HEK293 (cell line): ENCODE measurements at regions of chr17 and their contacts with region 1.

Region 1: GRCh38 chr17:1055751-1056645 is 59.1 kb downstream of the TIMM22 start:
- H3K4me3 ChIP-seq: no peak overlapping the region
- H3K27ac ChIP-seq: 0 out of 2 replicates have a peak overlapping the region, but pooled peaks have one; percentile 41
- H3K4me1 ChIP-seq: no peaks in the 10 kb centered on the region
- CTCF ChIP-seq: peak; percentile 77

Region 2: DNA sequence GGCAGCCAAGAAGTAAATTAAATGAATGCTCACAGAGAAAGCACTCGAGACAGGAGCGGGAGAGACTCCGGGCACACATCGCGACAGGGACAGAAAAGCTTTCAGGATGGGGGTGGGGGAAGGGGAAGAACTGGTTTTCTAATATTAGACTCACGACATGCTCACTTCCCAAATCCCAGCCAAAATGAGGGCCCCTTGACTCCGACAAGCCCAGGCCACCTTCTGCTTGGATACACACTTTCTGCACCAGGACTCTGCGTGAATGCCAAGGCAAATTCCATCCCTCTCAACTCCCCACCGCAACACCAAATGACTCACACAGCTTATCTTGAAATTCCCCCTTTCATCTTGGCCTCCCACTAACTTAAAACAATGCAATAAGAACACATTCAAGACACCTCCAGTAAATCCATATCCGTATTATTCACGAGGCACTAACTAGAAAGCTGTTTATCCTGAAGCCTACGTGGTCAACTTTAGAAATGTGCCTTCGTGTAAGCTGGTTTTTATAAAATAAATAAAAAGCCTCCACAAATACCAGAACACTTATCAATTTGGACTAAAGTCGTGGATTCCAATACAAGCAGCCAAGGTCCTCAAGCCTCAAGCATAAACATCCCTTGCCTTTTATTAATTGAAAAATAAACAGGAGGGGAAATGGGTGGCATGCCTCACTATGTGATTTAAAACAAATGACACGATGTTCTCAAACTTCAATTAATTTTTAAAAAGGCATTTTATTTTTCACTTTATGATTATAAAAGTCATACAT is 122.5 kb before region 1 on chr17:
- CTCF ChIA-PET with region 1: no interaction called
- POLR2A ChIA-PET with region 1: no interaction called
- H3K4me3 ChIP-seq: peak overlapping the region; percentile 0; the same call in 1 of the 2 replicates
- H3K27ac ChIP-seq: peak overlapping the region; percentile 35
- H3K4me1 ChIP-seq: peaks cover 11% of the 10 kb centered on the region
- CTCF ChIP-seq: no peak

Region 3: GRCh38 chr17:969811-970355 is 86.1 kb before region 1 on chr17:
- CTCF ChIA-PET with region 1: no interaction called
- POLR2A ChIA-PET with region 1: no interaction called
- H3K4me3 ChIP-seq: no peak overlapping the region
- H3K27ac ChIP-seq: peak overlapping the region; percentile 18; the same call in 1 of the 2 replicates
- H3K4me1 ChIP-seq: peaks cover 28% of the 10 kb centered on the region
- CTCF ChIP-seq: no peak

Region 4: GRCh38 chr17:1002771-1003555 is 53.0 kb before region 1 on chr17:
- CTCF ChIA-PET with region 1: interaction called, 48 read pairs
- POLR2A ChIA-PET with region 1: interaction called, 5 read pairs
- H3K4me3 ChIP-seq: no peak overlapping the region
- H3K27ac ChIP-seq: peak overlapping the region; percentile 44; the same call in 1 of the 2 replicates
- H3K4me1 ChIP-seq: peaks cover 11% of the 10 kb centered on the region
- CTCF ChIP-seq: no peak

Region 5: GRCh38 chr17:1039511-1040215 is 16.3 kb before region 1 on chr17:
- CTCF ChIA-PET with region 1: interaction called, 20 read pairs
- POLR2A ChIA-PET with region 1: no interaction called
- H3K4me3 ChIP-seq: no peak overlapping the region
- H3K27ac ChIP-seq: no peak overlapping the region
- H3K4me1 ChIP-seq: peaks cover 7% of the 10 kb centered on the region
- CTCF ChIP-seq: no peak

Region 6: GRCh38 chr17:1067282-1067956 is 11.4 kb after region 1 on chr17:
- CTCF ChIA-PET with region 1: interaction called, 18 read pairs
- POLR2A ChIA-PET with region 1: no interaction called
- H3K4me3 ChIP-seq: no peak overlapping the region
- H3K27ac ChIP-seq: no peak overlapping the region
- H3K4me1 ChIP-seq: no peaks in the 10 kb centered on the region
- CTCF ChIP-seq: no peak

Region 7: DNA sequence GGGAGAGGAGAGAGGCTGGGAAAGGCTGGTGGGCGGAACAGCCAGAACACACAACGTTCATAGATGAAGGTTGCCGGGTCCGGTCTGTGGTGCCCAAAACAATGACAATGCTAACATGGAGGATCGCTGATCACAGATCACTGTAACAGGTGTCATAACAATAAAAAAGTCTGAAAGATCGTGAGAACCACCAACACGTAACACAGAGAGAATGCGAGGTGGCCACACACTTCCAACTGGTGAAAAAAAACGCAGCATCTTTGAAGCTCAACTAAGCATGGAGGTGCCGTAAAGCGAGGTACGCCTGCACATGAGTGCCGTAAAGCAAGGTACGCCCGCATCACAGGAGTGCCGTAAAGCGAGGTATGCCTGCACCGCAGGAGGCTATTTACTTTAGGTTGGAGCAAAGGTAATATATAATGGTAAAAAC is 81.5 kb after region 1 on chr17:
- CTCF ChIA-PET with region 1: interaction called, 10 read pairs
- POLR2A ChIA-PET with region 1: no interaction called
- H3K4me3 ChIP-seq: no peak overlapping the region
- H3K27ac ChIP-seq: no peak overlapping the region
- H3K4me1 ChIP-seq: peaks cover 7% of the 10 kb centered on the region
- CTCF ChIP-seq: no peak

Region 8: GRCh38 chr17:1147661-1148060 is 91.7 kb after region 1 on chr17:
- CTCF ChIA-PET with region 1: interaction called, 53 read pairs
- POLR2A ChIA-PET with region 1: interaction called, 6 read pairs
- H3K4me3 ChIP-seq: no peak overlapping the region
- H3K27ac ChIP-seq: no peak overlapping the region
- H3K4me1 ChIP-seq: peaks cover 8% of the 10 kb centered on the region
- CTCF ChIP-seq: peak; percentile 79; the same call in 1 of the 2 replicates